Ovary (tissue), 10 donors: ENCODE measurements at regions of chr11 and their contacts with region 1.

Region 1: GRCh38 chr11:66592457-66593302 is at the starts of genes CCDC87 and CCS:
- DNase-seq: peak; percentile 98 to 99 (median 99)
- H3K4me3 ChIP-seq: peak within 1 kb of the TSS; percentile 63
- H3K27ac ChIP-seq: peak within 1 kb of the TSS; percentile 45 to 82
- H3K4me1 ChIP-seq: peaks cover 14% of the 10 kb centered on the region
- H3K27me3 ChIP-seq: no peaks in the 10 kb centered on the region
- CTCF ChIP-seq: peak; percentile 29 to 84 (median 79)
- EP300 ChIP-seq: no peak
- POLR2A ChIP-seq: peak; percentile 96
- total RNA-seq, gene CCDC87: 0.33 to 0.60 (median 0.46) TPM
- total RNA-seq, gene CCS: 27.7 to 53.1 (median 49.1) TPM

Region 2: GRCh38 chr11:66616379-66617154 is 23.9 kb after region 1 on chr11 and contains the start of gene RBM14:
- intact Hi-C with region 1: loop called in 1 of 4 experiments (anchors 1 kb)
- DNase-seq: peak; percentile 98 to 99 (median 99)
- H3K4me3 ChIP-seq: peak within 1 kb of the TSS; percentile 96
- H3K27ac ChIP-seq: peak within 1 kb of the TSS; percentile 77 to 92
- H3K4me1 ChIP-seq: peaks cover 15% of the 10 kb centered on the region
- H3K27me3 ChIP-seq: no peaks in the 10 kb centered on the region
- CTCF ChIP-seq: peak in 1 of 3 donors; percentile 18
- EP300 ChIP-seq: no peak
- POLR2A ChIP-seq: peak; percentile 100
- total RNA-seq, gene RBM14: 36.5 to 89.6 (median 71.9) TPM